Activated B cell treated with CpG ODN at 0.5 μM for 24 hours (primary cell): ENCODE measurements at regions of chr1 and their contacts with region 1.

Region 1: DNA sequence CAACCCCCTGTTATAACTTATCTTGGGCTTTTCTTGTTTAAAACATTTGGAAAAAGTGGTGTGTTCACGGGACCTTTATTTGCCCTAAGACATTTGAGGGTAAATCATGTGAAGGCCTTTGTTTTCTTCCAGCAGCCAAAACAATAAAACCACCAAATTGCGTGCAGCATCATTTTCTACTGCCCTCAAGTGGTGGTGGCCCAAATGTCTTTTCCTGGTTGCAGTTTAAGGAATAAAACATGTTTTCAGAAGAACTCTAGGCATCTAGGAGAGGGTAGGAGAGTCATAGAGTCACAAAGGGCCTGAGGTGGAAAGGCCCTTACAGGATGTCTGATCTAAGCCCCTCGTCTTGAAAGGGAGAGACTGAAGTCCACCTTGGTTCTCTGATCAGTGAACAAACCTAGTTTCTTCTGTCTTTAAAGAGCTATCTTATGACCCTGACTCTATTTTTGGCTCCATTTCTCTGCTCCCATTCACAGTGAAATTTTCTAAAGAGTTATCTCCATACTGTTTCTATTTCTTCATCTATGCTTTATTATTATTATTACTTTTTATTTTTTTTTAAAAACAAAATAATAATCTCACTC is 16.0 kb upstream of the EPS15 start:
- DNase-seq: no peak
- ATAC-seq: peak; percentile 58
- H3K4me3 Mint-ChIP-seq: no peak overlapping the region
- H3K27ac Mint-ChIP-seq: peak overlapping the region; percentile 54
- H3K4me1 Mint-ChIP-seq: peaks cover 11% of the 10 kb centered on the region
- H3K27me3 Mint-ChIP-seq: no peaks in the 10 kb centered on the region
- CTCF ChIP-seq: no peak

Region 2: GRCh38 chr1:51463561-51463960 is 71.5 kb before region 1 on chr1:
- CTCF ChIA-PET with region 1: interaction called, 3 read pairs
- POLR2A ChIA-PET with region 1: no interaction called
- intact Hi-C with region 1: loop called (anchors 2 kb)
- DNase-seq: no peak
- ATAC-seq: no peak
- H3K4me3 Mint-ChIP-seq: no peak overlapping the region
- H3K27ac Mint-ChIP-seq: no peak overlapping the region
- H3K4me1 Mint-ChIP-seq: no peaks in the 10 kb centered on the region
- H3K27me3 Mint-ChIP-seq: no peaks in the 10 kb centered on the region
- CTCF ChIP-seq: no peak

Region 3: GRCh38 chr1:51569284-51570062 is 34.4 kb after region 1 on chr1:
- CTCF ChIA-PET with region 1: interaction called, 5 read pairs
- POLR2A ChIA-PET with region 1: no interaction called
- intact Hi-C with region 1: loop called (anchors 5 kb)
- DNase-seq: no peak
- ATAC-seq: peak; percentile 53
- H3K4me3 Mint-ChIP-seq: peak overlapping the region; percentile 78
- H3K27ac Mint-ChIP-seq: peak overlapping the region; percentile 95
- H3K4me1 Mint-ChIP-seq: peaks cover 54% of the 10 kb centered on the region
- H3K27me3 Mint-ChIP-seq: no peaks in the 10 kb centered on the region
- CTCF ChIP-seq: no peak